ENCODE measurements at regions of chr5 and their contacts with region 1.

Region 1: DNA sequence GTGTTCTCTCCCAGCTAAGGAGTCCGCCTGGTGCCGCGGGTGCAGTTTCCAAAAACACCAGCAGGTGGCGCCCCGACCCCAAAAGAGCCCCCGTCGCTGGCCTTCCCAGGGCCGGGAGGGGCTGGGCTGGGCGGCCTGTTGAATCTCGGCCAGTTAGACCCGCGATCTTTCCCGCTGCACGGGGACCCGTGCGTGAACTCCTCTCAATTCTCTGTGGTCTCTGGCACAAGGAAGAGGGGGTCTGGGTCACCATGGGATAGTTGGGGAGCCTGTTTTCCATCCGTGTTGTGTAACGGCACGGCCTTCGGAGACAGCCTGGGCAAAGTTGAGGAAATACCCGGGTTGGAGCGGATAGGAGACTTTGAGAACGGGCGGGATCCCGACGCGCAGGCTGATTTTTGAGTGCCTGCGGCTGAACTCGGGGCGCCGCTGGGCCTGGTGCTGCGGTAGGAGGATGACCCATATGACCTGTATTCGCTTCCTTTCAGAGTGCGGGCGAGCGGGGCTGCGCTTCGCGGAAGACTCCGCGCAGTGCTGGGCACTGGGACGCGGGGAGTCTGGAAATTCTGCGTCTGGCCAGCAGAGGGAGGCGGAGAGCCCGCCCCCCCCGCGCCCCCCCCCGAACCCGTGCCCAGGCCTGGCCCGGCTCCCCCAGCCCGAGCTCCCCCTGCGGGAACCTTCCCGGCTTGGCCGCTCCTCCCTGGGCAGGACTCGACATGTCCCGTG is 7.9 kb upstream of the PSD2 start:
- DNase-seq: peak in 1 of 2 experiments; percentile 100
- H3K4me3 ChIP-seq: peak overlapping the region; percentile 39 to 82 (median 66)
- H3K27ac ChIP-seq: no peak overlapping the region
- H3K4me1 ChIP-seq: peaks cover 0 to 5% (median 5%) of the 10 kb centered on the region in 4 experiments; a peak in 5 of 7 replicates
- H3K27me3 ChIP-seq: peaks cover 0 to 22% (median 16%) of the 10 kb centered on the region in 4 experiments; a peak in 5 of 7 replicates
- CTCF ChIP-seq: peak in 2 of 3 experiments; percentile 95 to 98; a peak in 3 of 4 replicates
- EP300 ChIP-seq: no peak
- POLR2A ChIP-seq: no peak
- RAD21 ChIP-seq: peak; percentile 96 to 99

Region 2: DNA sequence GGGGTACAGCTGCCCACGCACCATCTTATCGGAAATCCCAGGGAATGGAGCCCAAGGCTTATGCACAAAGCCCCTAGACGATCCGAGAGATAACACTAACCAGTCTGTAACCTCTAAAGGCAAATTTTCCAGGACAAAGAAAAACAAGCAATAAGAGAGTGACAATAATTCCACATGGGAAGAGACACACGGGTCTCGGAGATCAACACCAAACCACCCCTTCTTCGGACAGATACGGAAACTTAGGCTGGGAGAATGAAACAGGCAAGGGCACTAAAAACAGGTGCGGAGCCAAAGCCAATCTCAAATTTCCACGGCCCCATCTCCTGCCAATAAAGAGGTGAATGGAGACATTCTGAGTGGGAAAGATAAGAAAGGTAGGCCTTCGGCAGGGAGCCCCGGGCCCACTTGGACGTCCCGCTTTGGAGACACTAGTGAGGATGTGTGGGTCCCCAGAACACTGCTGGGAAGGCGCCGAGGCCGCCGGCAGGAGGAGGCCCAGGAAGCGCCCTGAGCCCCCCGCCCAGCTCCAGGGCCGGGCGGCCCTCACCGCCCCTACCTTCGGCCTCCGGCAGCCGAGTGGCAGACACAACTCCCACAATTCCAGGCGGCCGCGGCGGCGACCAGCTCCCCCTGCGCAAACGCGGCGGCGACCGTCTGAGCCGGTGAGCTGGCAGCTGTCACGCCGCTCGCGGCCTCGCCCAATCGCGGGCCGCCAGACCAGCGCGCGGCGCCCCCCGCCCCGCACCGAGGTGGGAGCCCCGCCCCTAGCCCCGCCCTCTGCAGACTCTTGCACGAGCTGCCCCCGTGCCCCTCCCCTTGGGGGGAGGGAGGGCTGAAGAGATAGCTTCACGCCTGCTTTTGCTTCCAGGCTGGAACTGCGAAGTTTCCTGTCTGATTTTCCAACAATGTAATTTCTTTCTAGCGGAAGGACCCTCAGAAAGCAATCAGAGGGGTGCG is 589.7 kb before region 1 on chr5 and contains the start of gene SIL1:
- CTCF ChIA-PET with region 1: no interaction called
- POLR2A ChIA-PET with region 1: no interaction called
- DNase-seq: peak; percentile 88 to 93
- H3K4me3 ChIP-seq: peak within 1 kb of the TSS; percentile 42 to 68 (median 50)
- H3K27ac ChIP-seq: peak within 1 kb of the TSS; percentile 54
- H3K4me1 ChIP-seq: no peaks in the 10 kb centered on the region
- H3K27me3 ChIP-seq: no peaks in the 10 kb centered on the region
- CTCF ChIP-seq: no peak
- EP300 ChIP-seq: no peak; a peak in 1 of 3 replicates
- POLR2A ChIP-seq: peak; percentile 55 to 78
- RAD21 ChIP-seq: no peak
- total RNA-seq, gene SIL1: 6.6 and 8.3 TPM in 2 replicates

Region 3: GRCh38 chr5:139808493-139809139 is 20.9 kb after region 1 on chr5:
- CTCF ChIA-PET with region 1: interaction called, 68 read pairs
- POLR2A ChIA-PET with region 1: no interaction called
- DNase-seq: peak in 1 of 2 experiments; percentile 88
- H3K4me3 ChIP-seq: no peak overlapping the region
- H3K27ac ChIP-seq: no peak overlapping the region
- H3K4me1 ChIP-seq: no peaks in the 10 kb centered on the region
- H3K27me3 ChIP-seq: peaks cover 0 to 3% (median 1%) of the 10 kb centered on the region in 4 experiments; a peak in 1 of 7 replicates
- CTCF ChIP-seq: no peak
- EP300 ChIP-seq: no peak
- POLR2A ChIP-seq: no peak
- RAD21 ChIP-seq: no peak

Region 4: DNA sequence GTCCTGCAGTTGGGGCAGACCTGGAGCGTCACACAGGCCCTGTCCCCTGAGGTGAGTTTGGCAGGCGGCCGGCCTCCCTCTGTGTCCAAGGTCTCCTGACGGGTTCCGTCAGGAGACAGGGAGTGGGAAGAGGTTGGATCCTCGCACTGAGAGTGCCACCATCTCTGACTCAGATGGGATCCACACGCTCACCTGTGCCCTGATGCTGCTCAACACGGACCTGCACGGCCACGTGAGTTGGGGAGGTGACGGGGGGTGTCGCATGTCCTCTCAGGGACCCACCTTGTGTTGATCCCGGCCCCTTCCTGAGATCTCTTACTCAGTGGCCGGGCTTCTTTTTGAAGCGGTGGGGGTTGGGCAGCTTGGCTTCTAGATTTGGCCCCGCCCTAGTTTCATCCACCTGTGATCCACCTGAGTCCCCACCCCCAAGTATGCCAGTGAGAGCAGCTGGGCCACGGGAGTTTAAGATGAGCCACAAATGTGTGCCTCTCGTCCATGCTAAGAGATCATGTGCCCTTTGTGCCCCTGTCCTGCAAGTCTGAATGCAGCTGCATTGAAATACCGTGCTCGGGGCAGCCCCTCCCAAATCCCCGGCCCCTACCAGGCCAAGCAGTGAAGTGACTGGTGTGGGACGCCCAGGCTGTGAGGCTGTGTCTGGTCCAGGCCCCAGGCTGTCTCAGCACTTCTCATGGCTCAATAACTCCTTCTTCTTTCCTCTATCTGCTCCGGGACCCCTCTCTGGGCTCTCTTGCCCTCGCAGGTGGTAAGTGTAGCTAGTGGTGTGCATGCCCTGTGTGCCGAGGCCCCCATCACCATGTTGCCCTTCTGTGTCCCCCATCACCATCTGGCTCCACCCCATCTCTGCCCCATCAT is 35.1 kb after region 1 on chr5:
- CTCF ChIA-PET with region 1: interaction called, 18 read pairs
- POLR2A ChIA-PET with region 1: no interaction called
- DNase-seq: no peak
- H3K4me3 ChIP-seq: no peak overlapping the region
- H3K27ac ChIP-seq: no peak overlapping the region
- H3K4me1 ChIP-seq: peaks cover 0 to 7% (median under 1%) of the 10 kb centered on the region in 4 experiments; a peak in 6 of 7 replicates
- H3K27me3 ChIP-seq: no peaks in the 10 kb centered on the region
- CTCF ChIP-seq: no peak
- EP300 ChIP-seq: no peak
- POLR2A ChIP-seq: no peak
- RAD21 ChIP-seq: no peak

Region 5: DNA sequence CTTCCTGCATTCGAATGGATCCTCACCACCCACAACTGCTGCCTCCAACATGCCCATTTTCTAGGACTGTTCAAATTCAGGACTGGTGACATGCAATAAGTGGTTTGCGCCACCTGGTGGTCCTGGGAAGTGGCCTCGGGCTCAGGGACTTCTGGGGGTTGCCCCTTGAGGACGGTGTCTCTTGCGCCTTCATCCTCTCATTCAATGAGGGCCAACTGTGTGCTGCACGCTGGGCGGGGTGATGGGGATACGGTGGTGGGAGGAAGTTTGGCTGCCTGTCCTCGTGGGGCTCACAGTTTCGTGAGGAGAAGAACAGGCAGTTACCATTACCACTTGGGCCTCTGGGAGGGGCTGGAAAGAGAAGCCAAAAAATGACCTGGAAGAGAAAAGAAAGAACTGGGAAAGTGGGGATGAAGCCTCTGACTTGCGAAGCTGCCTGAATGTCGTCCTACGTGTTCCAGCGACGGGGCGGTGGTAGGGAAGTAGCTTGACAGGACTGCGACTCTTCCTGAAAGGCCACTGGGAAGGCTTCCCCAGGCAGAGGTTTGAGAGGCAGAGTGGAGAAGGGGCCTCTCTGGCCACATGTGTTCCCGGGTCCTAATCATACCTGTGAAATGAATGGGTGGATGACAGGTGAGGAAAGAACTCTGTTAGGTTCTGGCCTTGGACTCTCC is 56.9 kb after region 1 on chr5:
- CTCF ChIA-PET with region 1: interaction called, 113 read pairs
- POLR2A ChIA-PET with region 1: no interaction called
- DNase-seq: peak; percentile 64 to 92
- H3K4me3 ChIP-seq: no peak overlapping the region
- H3K27ac ChIP-seq: no peak overlapping the region
- H3K4me1 ChIP-seq: peaks cover 0 to 2% (median 1%) of the 10 kb centered on the region in 4 experiments; a peak in 5 of 7 replicates
- H3K27me3 ChIP-seq: peaks cover 16 to 50% (median 44%) of the 10 kb centered on the region in 4 experiments
- CTCF ChIP-seq: peak; percentile 93 to 97 (median 96)
- EP300 ChIP-seq: no peak
- POLR2A ChIP-seq: no peak
- RAD21 ChIP-seq: peak; percentile 88 to 90

Region 6: GRCh38 chr5:139863855-139864558 is 76.3 kb after region 1 on chr5:
- CTCF ChIA-PET with region 1: interaction called, 120 read pairs
- POLR2A ChIA-PET with region 1: interaction called, 4 read pairs
- DNase-seq: peak in 1 of 2 experiments; percentile 89
- H3K4me3 ChIP-seq: no peak overlapping the region
- H3K27ac ChIP-seq: no peak overlapping the region
- H3K4me1 ChIP-seq: no peaks in the 10 kb centered on the region
- H3K27me3 ChIP-seq: no peaks in the 10 kb centered on the region
- CTCF ChIP-seq: peak; percentile 72 to 89 (median 84)
- EP300 ChIP-seq: no peak
- POLR2A ChIP-seq: no peak
- RAD21 ChIP-seq: peak; percentile 79 to 86

Region 7: GRCh38 chr5:139903795-139904565 is 116.2 kb after region 1 on chr5:
- CTCF ChIA-PET with region 1: interaction called, 21 read pairs
- POLR2A ChIA-PET with region 1: no interaction called
- DNase-seq: peak in 1 of 2 experiments; percentile 78
- H3K4me3 ChIP-seq: peak overlapping the region; percentile 37 to 81 (median 59)
- H3K27ac ChIP-seq: no peak overlapping the region
- H3K4me1 ChIP-seq: peaks cover 0 to 23% (median 10%) of the 10 kb centered on the region in 4 experiments; a peak in 6 of 7 replicates
- H3K27me3 ChIP-seq: peaks cover 35 to 77% (median 59%) of the 10 kb centered on the region in 4 experiments
- CTCF ChIP-seq: no peak
- EP300 ChIP-seq: no peak
- POLR2A ChIP-seq: no peak
- RAD21 ChIP-seq: no peak